Activated CD4-positive, alpha-beta T cell treated with anti-CD3 and anti-CD28 coated beads for 36 hours (primary cell): ENCODE measurements at regions of chr1 and their contacts with region 1.

Region 1: DNA sequence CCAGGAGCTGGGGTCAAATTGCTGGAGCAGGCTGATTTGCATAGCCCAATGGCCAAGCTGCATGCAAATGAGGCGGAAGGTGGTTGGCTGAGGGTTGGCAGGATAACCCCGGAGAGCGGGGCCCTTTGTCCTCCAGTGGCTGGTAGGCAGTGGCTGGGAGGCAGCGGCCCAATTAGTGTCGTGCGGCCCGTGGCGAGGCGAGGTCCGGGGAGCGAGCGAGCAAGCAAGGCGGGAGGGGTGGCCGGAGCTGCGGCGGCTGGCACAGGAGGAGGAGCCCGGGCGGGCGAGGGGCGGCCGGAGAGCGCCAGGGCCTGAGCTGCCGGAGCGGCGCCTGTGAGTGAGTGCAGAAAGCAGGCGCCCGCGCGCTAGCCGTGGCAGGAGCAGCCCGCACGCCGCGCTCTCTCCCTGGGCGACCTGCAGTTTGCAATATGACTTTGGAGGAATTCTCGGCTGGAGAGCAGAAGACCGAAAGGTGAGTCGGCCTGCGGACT is at the start of gene GADD45A:
- DNase-seq: peak; percentile 97
- ATAC-seq: peak; percentile 83
- H3K4me3 Mint-ChIP-seq: peak within 1 kb of the TSS; percentile 81
- H3K27ac Mint-ChIP-seq: peak within 1 kb of the TSS; percentile 88
- H3K4me1 Mint-ChIP-seq: peaks cover 49% of the 10 kb centered on the region
- H3K27me3 Mint-ChIP-seq: no peaks in the 10 kb centered on the region
- total RNA-seq, gene GADD45A: 20.5 to 26.7 TPM

Region 2: GRCh38 chr1:66929999-66930822 is 754.9 kb before region 1 on chr1:
- CTCF ChIA-PET with region 1: no interaction called
- POLR2A ChIA-PET with region 1: no interaction called
- intact Hi-C with region 1: loop called (anchors 2 to 5 kb)
- DNase-seq: peak; percentile 96
- ATAC-seq: peak; percentile 63
- H3K4me3 Mint-ChIP-seq: peak overlapping the region; percentile 86
- H3K27ac Mint-ChIP-seq: peak overlapping the region; percentile 94
- H3K4me1 Mint-ChIP-seq: peaks cover 53% of the 10 kb centered on the region
- H3K27me3 Mint-ChIP-seq: no peaks in the 10 kb centered on the region

Region 3: GRCh38 chr1:67274623-67275325 is 410.3 kb before region 1 on chr1:
- CTCF ChIA-PET with region 1: interaction called, 4 read pairs
- POLR2A ChIA-PET with region 1: no interaction called
- intact Hi-C with region 1: loop called in 1 of 2 experiments (anchors 10 kb)
- DNase-seq: peak; percentile 44
- ATAC-seq: peak; percentile 90
- H3K4me3 Mint-ChIP-seq: no peak overlapping the region
- H3K27ac Mint-ChIP-seq: peak overlapping the region; percentile 76
- H3K4me1 Mint-ChIP-seq: peaks cover 54% of the 10 kb centered on the region
- H3K27me3 Mint-ChIP-seq: peaks cover 3% of the 10 kb centered on the region

Region 4: DNA sequence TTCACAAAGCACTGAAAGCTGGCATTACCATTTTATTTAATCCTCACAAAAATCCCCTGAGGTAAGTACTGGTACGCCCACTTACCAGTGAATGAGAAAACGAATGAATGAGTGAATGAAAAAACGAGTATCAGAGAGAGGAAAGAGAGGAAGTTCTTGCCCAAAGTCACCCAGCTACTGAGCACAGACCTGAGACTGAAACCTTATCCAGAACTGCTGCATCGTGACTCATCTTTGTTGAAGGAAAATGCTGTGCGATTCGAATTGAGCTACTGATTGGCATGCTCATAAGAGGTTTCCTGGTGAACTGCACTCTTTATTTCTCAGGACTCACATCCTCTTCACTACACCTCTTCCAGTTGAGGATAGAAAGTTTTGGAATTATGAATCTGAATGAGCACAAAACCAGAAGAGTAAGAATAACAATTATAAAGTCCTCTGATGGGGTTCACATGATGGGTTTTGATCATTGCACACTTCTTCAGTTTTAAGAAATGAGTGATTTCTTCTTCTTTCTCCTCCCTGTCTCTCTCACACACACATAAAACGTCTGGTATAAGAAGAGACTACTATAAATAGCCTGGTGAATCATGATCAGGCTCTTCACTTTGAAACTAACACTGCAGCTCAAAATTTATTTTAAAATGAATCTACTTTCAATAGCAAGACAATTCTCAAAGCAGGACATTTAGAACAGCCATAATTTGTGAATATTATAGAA is 345.3 kb before region 1 on chr1:
- CTCF ChIA-PET with region 1: no interaction called
- POLR2A ChIA-PET with region 1: interaction called, 4 read pairs
- intact Hi-C with region 1: loop called (anchors 1 to 2 kb)
- DNase-seq: peak; percentile 67
- ATAC-seq: peak; percentile 67
- H3K4me3 Mint-ChIP-seq: peak overlapping the region; percentile 40
- H3K27ac Mint-ChIP-seq: peak overlapping the region; percentile 94
- H3K4me1 Mint-ChIP-seq: peaks cover 87% of the 10 kb centered on the region
- H3K27me3 Mint-ChIP-seq: no peaks in the 10 kb centered on the region

Region 5: GRCh38 chr1:67674260-67675011 is 10.7 kb before region 1 on chr1:
- CTCF ChIA-PET with region 1: interaction called, 6 read pairs
- POLR2A ChIA-PET with region 1: no interaction called
- intact Hi-C with region 1: loop called in 1 of 2 experiments (anchors 1 kb)
- DNase-seq: peak; percentile 63
- ATAC-seq: peak; percentile 95
- H3K4me3 Mint-ChIP-seq: peak overlapping the region; percentile 45
- H3K27ac Mint-ChIP-seq: peak overlapping the region; percentile 78
- H3K4me1 Mint-ChIP-seq: peaks cover 21% of the 10 kb centered on the region
- H3K27me3 Mint-ChIP-seq: peaks cover 2% of the 10 kb centered on the region

Region 6: DNA sequence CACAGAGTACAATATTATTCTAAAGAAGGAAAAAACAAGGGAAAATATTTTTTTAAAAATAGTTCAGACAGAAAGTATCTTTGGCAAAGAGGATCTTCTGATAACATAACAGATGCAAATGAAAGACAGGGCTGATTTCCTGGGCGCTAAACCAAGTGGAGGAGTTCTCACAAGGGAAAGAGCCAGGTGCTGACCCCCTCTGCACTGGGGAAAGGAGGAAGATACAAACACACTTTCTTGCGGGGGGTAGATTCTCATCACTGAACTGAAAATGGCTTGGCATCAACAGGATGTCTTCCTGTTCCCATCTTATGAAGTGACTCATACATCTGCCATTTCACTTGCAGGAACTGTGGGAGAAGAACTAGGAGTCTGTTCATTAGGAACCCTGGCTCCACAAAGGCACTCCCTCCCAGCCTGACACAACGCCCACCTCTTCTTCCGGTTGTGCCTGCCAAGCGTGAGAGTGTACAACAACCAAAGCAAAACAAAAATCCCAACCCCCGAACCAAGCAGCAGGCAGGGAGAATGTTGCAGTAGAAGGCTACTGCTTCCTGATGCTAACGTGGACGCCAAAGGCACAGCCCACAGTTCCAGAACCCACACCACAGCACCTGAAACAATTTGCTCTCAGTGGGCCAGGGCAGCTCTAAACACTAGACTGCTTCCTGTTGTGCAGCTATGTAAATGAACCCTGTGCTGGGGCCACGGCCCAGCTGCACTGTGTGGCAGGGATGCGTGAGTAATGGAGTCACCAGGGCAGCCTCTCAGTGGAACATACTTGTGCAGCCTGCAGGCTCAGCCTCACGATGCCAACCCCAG is 50.9 kb after region 1 on chr1:
- CTCF ChIA-PET with region 1: interaction called, 3 read pairs
- POLR2A ChIA-PET with region 1: interaction called, 3 read pairs
- intact Hi-C with region 1: loop called in 1 of 2 experiments (anchors 1 kb)
- DNase-seq: peak; percentile 74
- ATAC-seq: peak; percentile 99
- H3K4me3 Mint-ChIP-seq: peak overlapping the region; percentile 49
- H3K27ac Mint-ChIP-seq: peak overlapping the region; percentile 81
- H3K4me1 Mint-ChIP-seq: peaks cover 16% of the 10 kb centered on the region
- H3K27me3 Mint-ChIP-seq: no peaks in the 10 kb centered on the region